ENCODE measurements at regions of chr12 and their contacts with region 1.

Region 1: GRCh38 chr12:12736759-12737676 is 19.9 kb downstream of the CDKN1B start:
- DNase-seq: peak; percentile 84
- ATAC-seq: peak; percentile 95
- H3K4me3 Mint-ChIP-seq: peak overlapping the region; percentile 73
- H3K27ac Mint-ChIP-seq: peak overlapping the region; percentile 89
- H3K4me1 Mint-ChIP-seq: peaks cover 68% of the 10 kb centered on the region
- H3K27me3 Mint-ChIP-seq: no peaks in the 10 kb centered on the region

Region 2: DNA sequence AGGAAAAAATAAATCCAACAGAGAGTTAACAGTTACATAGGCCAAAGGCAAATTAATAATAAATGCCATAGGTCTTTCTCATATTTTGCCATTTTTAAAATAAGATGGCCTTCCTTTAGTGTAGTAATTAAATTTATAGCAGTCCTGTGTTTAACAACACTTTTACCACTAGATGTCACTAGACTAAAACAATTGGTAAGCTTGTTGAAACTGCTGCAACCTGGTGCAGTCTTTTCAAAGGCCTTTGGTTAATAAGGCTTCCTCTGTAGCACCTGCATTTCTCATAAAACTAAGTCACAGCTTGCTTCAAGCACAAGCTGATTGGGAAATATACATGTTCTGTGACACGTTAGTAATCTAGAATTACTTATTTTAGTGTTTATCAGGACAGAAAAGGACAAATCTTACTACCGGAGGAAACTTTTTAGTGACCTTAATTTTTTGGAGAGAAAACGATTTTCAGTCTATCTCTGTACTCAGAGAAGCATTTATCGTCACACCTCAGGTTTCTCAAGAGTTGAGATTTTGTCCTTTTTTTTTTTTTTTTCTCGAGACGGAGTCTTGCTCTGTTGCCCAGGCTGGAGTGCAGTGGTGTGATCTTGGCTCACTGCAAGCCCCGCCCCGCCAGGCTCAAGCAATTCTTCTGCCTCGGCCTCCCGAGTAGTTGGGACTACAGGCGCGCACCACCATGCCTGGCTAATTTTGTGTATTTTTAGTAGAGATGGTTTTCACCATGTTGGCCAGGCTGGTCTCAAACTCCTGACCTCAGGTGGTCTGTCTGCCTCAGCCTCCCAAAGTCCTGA is 360.2 kb before region 1 on chr12:
- CTCF ChIA-PET with region 1: interaction called, 43 read pairs
- POLR2A ChIA-PET with region 1: interaction called, 11 read pairs
- DNase-seq: peak; percentile 54
- ATAC-seq: peak; percentile 64
- H3K4me3 Mint-ChIP-seq: no peak overlapping the region
- H3K27ac Mint-ChIP-seq: peak overlapping the region; percentile 1
- H3K4me1 Mint-ChIP-seq: peaks cover 42% of the 10 kb centered on the region
- H3K27me3 Mint-ChIP-seq: no peaks in the 10 kb centered on the region

Region 3: DNA sequence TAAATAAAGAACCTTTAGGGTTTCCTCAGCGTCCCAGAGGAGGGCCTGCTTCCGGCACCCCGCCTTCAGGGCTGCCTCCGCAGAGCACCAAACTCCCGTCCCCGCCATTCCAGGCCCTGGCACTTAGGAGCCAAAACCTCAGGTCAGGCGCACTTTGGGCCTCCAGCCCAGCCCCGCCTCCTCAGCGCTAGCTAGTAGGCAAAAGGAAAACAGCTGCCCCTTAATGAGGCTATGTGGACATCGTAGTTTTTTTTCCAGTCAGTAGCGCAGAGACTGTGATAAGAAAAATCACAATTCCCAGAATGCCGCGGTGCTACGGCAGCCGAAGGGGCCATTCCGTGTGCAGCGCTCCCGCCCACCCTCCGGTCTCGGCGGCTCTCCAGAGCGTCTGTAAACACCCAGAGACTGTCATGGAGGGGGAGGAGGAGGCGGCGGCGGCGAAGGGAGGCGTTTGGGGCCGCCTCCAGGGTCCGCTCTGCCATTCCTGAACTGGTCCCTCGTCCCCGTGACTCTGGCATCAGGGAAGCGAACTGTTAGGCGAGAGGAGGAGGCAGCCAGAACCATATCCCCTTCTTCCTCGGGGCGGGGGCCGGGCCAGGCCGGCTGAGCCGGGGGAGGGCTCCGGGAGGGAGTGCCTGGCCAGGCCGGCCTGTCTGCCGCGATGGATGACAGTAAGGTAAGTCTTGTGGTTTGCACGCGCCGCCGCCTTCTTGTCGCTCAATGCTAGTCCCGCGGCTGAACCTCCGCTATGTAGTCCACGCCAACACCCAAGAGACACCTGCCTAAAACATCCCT is 125.3 kb before region 1 on chr12 and contains the start of gene CREBL2:
- CTCF ChIA-PET with region 1: interaction called, 12 read pairs
- POLR2A ChIA-PET with region 1: interaction called, 4 read pairs
- DNase-seq: peak; percentile 89
- ATAC-seq: peak; percentile 91
- H3K4me3 Mint-ChIP-seq: peak within 1 kb of the TSS; percentile 85
- H3K27ac Mint-ChIP-seq: peak within 1 kb of the TSS; percentile 94
- H3K4me1 Mint-ChIP-seq: peaks cover 40% of the 10 kb centered on the region
- H3K27me3 Mint-ChIP-seq: no peaks in the 10 kb centered on the region
- total RNA-seq, gene CREBL2: 13.2 to 14.3 TPM

Region 4: GRCh38 chr12:12696562-12697383 is 40.2 kb before region 1 on chr12:
- CTCF ChIA-PET with region 1: interaction called, 29 read pairs
- POLR2A ChIA-PET with region 1: interaction called, 8 read pairs
- DNase-seq: peak; percentile 94
- ATAC-seq: peak; percentile 86
- H3K4me3 Mint-ChIP-seq: peak overlapping the region; percentile 91
- H3K27ac Mint-ChIP-seq: peak overlapping the region; percentile 98
- H3K4me1 Mint-ChIP-seq: peaks cover 43% of the 10 kb centered on the region
- H3K27me3 Mint-ChIP-seq: no peaks in the 10 kb centered on the region

Region 5: GRCh38 chr12:12724661-12725545 is 12.1 kb before region 1 on chr12:
- CTCF ChIA-PET with region 1: interaction called, 66 read pairs
- POLR2A ChIA-PET with region 1: interaction called, 516 read pairs
- DNase-seq: peak; percentile 94
- ATAC-seq: peak; percentile 62
- H3K4me3 Mint-ChIP-seq: peak overlapping the region; percentile 87
- H3K27ac Mint-ChIP-seq: peak overlapping the region; percentile 96
- H3K4me1 Mint-ChIP-seq: peaks cover 20% of the 10 kb centered on the region
- H3K27me3 Mint-ChIP-seq: no peaks in the 10 kb centered on the region

Region 6: DNA sequence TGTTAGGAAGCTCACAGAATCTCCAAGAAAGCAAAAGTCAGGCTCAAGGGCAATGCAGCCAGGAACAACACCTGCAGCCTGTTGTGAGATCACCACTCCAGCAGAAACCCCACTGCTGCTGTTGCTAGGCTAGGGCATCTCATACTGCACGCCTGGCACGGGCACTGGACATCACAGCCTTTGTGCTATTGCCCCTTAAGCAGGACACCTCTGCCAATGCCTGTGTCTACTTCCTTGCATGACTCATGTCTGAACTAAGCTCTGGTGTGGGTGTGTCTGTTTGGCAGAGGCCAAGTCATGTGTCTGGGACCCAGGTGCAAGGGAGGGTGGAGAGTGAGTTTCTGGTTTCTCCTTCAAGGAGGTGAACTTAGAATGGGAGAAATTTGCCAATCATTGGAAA is 66.2 kb after region 1 on chr12:
- CTCF ChIA-PET with region 1: interaction called, 17 read pairs
- POLR2A ChIA-PET with region 1: interaction called, 4 read pairs
- DNase-seq: peak; percentile 71
- ATAC-seq: peak; percentile 74
- H3K4me3 Mint-ChIP-seq: peak overlapping the region; percentile 33
- H3K27ac Mint-ChIP-seq: peak overlapping the region; percentile 81
- H3K4me1 Mint-ChIP-seq: peaks cover 60% of the 10 kb centered on the region
- H3K27me3 Mint-ChIP-seq: no peaks in the 10 kb centered on the region

Region 7: DNA sequence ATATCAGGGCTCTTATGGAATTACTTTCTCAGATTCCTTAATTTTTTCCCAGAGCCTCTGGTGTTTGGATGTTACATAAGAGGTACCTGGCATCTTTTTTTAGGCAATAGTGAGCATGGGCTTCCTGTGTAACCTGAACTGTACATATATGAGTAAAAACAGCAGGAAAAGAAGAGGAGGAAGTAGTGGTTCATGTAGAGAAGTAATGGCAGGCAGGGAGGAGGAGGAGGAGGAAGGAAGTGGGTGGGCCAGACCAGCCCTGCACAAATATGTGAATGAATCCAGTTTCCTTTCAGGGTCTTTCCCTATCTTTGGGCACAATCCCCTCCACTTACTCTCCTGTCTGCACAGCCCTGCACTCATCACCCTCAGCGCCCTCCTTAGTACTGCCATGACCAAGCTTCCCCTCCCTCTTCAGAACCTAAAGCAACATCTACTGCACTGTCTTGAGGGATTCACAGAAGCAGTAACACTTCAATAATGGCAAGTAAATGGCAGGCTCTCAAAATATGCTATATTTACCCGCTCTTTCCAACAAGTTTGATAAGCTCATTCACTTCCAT is 407.3 kb after region 1 on chr12:
- CTCF ChIA-PET with region 1: no interaction called
- POLR2A ChIA-PET with region 1: no interaction called
- DNase-seq: peak; percentile 34
- ATAC-seq: peak; percentile 80
- H3K4me3 Mint-ChIP-seq: peak overlapping the region; percentile 18
- H3K27ac Mint-ChIP-seq: peak overlapping the region; percentile 81
- H3K4me1 Mint-ChIP-seq: peaks cover 22% of the 10 kb centered on the region
- H3K27me3 Mint-ChIP-seq: peaks cover 12% of the 10 kb centered on the region

Measured in activated CD8-positive, alpha-beta T cell treated with anti-CD3 and anti-CD28 coated beads, Interleukin-2, amount 10 ng/mL, durations not matched to agents 7 days and 5 days (primary cell).